ENCODE measurements at regions of chr3 and their contacts with region 1.

Region 1: GRCh38 chr3:3610581-3611298 is 188.5 kb upstream of the LRRN1 start:
- DNase-seq: no peak
- H3K4me3 Mint-ChIP-seq: no peak overlapping the region
- H3K27ac Mint-ChIP-seq: no peak overlapping the region
- H3K4me1 Mint-ChIP-seq: peaks cover 8% of the 10 kb centered on the region
- H3K27me3 Mint-ChIP-seq: no peaks in the 10 kb centered on the region
- CTCF ChIP-seq: no peak

Region 2: GRCh38 chr3:3240986-3241385 is 369.8 kb before region 1 on chr3:
- CTCF ChIA-PET with region 1: no interaction called
- intact Hi-C with region 1: no loop called
- DNase-seq: no peak
- H3K4me3 Mint-ChIP-seq: no peak overlapping the region
- H3K27ac Mint-ChIP-seq: no peak overlapping the region
- H3K4me1 Mint-ChIP-seq: no peaks in the 10 kb centered on the region
- H3K27me3 Mint-ChIP-seq: no peaks in the 10 kb centered on the region
- CTCF ChIP-seq: no peak

Region 3: GRCh38 chr3:3665961-3666640 is 55.4 kb after region 1 on chr3:
- CTCF ChIA-PET with region 1: no interaction called
- intact Hi-C with region 1: loop called (anchors 5 kb)
- DNase-seq: peak; percentile 31
- H3K4me3 Mint-ChIP-seq: peak overlapping the region; percentile 42
- H3K27ac Mint-ChIP-seq: peak overlapping the region; percentile 83
- H3K4me1 Mint-ChIP-seq: peaks cover 41% of the 10 kb centered on the region
- H3K27me3 Mint-ChIP-seq: no peaks in the 10 kb centered on the region
- CTCF ChIP-seq: no peak

Measured in Calu3 (cell line).